ENCODE measurements at regions of chr16 and their contacts with region 1.

Region 1: DNA sequence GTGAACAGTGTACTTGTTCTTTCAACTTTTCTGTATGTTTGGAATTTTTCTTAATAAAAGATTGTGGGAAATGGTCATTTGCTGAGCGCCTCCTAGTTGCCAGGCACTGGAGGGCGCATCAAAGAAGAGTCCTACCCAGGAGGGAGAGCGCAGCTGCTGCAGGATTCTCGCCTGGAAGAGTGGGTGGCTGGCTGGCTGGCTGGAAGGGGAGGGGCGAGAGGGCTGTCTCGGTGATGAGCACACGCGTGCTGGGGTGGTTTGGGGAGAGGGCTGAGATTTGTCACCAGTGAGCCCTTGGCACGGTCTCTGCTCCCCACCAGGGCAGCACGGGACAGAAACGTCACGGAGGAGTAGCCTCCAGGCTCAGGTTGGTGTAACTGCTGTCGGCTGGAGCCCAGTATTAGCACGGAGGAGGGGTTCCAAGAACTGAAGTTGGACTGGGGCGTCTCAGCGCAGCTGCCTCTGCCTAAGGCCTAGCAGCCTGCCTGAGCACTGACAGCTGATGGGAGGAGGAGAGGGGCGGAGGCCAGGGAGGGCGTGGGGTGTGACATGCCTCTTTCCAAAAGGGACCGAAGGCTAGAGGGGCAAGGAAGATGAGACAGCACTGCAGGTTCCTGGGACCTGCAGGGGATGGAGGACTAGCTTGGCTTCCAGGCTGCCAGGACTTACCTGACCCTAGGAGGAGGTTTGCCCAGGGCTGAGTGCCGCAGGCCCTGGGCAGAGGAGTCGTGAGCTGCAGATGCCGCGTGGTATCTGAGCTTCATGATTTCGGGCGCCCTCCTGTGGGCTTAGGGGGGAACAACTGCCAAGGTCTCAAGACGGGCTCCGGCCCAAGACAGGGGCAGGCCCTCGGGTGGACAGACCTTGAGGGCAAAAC is 5.7 kb downstream of the LDHD start:
- DNase-seq: peak; percentile 90
- H3K4me3 Mint-ChIP-seq: peak overlapping the region; percentile 83
- H3K27ac Mint-ChIP-seq: peak overlapping the region; percentile 85
- H3K4me1 Mint-ChIP-seq: peaks cover 59% of the 10 kb centered on the region
- H3K27me3 Mint-ChIP-seq: peaks cover 7% of the 10 kb centered on the region

Region 2: GRCh38 chr16:74709441-74709877 is 401.4 kb before region 1 on chr16:
- CTCF ChIA-PET with region 1: interaction called, 4 read pairs
- POLR2A ChIA-PET with region 1: no interaction called
- intact Hi-C with region 1: loop called (anchors 2 kb)
- DNase-seq: peak; percentile 88
- H3K4me3 Mint-ChIP-seq: no peak overlapping the region
- H3K27ac Mint-ChIP-seq: peak overlapping the region; percentile 2
- H3K4me1 Mint-ChIP-seq: peaks cover 10% of the 10 kb centered on the region
- H3K27me3 Mint-ChIP-seq: no peaks in the 10 kb centered on the region

Region 3: GRCh38 chr16:74862741-74863244 is 248.1 kb before region 1 on chr16:
- CTCF ChIA-PET with region 1: interaction called, 12 read pairs
- POLR2A ChIA-PET with region 1: no interaction called
- intact Hi-C with region 1: loop called (anchors 2 kb)
- DNase-seq: peak; percentile 29
- H3K4me3 Mint-ChIP-seq: no peak overlapping the region
- H3K27ac Mint-ChIP-seq: no peak overlapping the region
- H3K4me1 Mint-ChIP-seq: peaks cover 4% of the 10 kb centered on the region
- H3K27me3 Mint-ChIP-seq: no peaks in the 10 kb centered on the region

Region 4: DNA sequence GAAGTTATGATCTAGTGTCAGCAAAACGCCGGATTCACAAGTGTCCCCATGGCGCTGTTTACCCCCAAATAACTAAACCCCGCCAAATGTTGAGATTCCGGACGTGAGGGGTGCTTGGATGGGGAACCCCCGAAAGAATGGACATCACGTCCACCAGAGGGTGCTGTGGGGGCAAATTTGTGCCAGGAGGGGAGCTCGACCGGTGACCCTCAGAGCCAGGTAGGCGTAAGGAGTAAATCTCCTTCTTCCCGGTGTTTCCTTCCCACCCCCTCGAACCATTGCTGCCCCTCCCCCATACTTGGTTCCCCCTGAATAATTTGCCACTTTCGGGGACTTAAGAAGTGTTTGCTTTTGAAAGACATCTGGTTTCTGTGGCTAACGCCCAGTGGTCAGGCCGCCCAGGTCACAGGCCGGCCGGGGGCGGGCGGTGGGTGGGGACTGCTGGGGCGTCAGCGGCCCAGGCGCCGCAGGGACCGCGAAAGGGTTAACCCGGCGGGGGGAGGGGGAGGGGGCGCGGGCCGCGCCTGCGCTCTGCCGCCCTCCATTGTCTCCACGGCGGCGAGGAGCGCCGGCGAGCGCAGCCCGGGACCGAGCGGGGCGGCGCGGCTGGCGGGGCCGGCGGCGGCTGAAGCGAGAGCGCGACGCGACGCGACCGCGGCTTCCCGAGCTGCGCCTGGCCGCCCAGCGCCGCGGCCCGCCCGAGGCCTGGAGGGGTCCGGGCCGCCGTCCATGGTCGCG is 112.2 kb before region 1 on chr16 and contains the start of gene ZNRF1:
- CTCF ChIA-PET with region 1: interaction called, 222 read pairs
- POLR2A ChIA-PET with region 1: interaction called, 35 read pairs
- intact Hi-C with region 1: loop called (anchors 1 kb)
- DNase-seq: peak; percentile 90
- H3K4me3 Mint-ChIP-seq: peak within 1 kb of the TSS; percentile 88
- H3K27ac Mint-ChIP-seq: peak within 1 kb of the TSS; percentile 84
- H3K4me1 Mint-ChIP-seq: peaks cover 32% of the 10 kb centered on the region
- H3K27me3 Mint-ChIP-seq: no peaks in the 10 kb centered on the region
- total RNA-seq, gene ZNRF1: 40.9 to 45.6 TPM

Region 5: GRCh38 chr16:75074920-75075687 is 35.8 kb before region 1 on chr16:
- CTCF ChIA-PET with region 1: interaction called, 27 read pairs
- POLR2A ChIA-PET with region 1: interaction called, 11 read pairs
- intact Hi-C with region 1: loop called (anchors 1 kb)
- DNase-seq: peak; percentile 93
- H3K4me3 Mint-ChIP-seq: peak overlapping the region; percentile 52
- H3K27ac Mint-ChIP-seq: peak overlapping the region; percentile 91
- H3K4me1 Mint-ChIP-seq: peaks cover 42% of the 10 kb centered on the region
- H3K27me3 Mint-ChIP-seq: no peaks in the 10 kb centered on the region

Region 6: GRCh38 chr16:75148311-75149195 is 37.7 kb after region 1 on chr16 and contains the start of gene ZFP1:
- CTCF ChIA-PET with region 1: interaction called, 6 read pairs
- POLR2A ChIA-PET with region 1: no interaction called
- intact Hi-C with region 1: loop called (anchors 2 kb)
- DNase-seq: peak; percentile 96
- H3K4me3 Mint-ChIP-seq: peak within 1 kb of the TSS; percentile 87
- H3K27ac Mint-ChIP-seq: peak within 1 kb of the TSS; percentile 76
- H3K4me1 Mint-ChIP-seq: peaks cover 29% of the 10 kb centered on the region
- H3K27me3 Mint-ChIP-seq: no peaks in the 10 kb centered on the region
- total RNA-seq, gene ZFP1: 17.2 to 19.4 TPM

Region 7: GRCh38 chr16:75192601-75193297 is 81.9 kb after region 1 on chr16:
- CTCF ChIA-PET with region 1: no interaction called
- POLR2A ChIA-PET with region 1: no interaction called
- intact Hi-C with region 1: no loop called
- DNase-seq: no peak
- H3K4me3 Mint-ChIP-seq: no peak overlapping the region
- H3K27ac Mint-ChIP-seq: no peak overlapping the region
- H3K4me1 Mint-ChIP-seq: no peaks in the 10 kb centered on the region
- H3K27me3 Mint-ChIP-seq: peaks cover 10% of the 10 kb centered on the region

Measured in activated CD4-positive, alpha-beta memory T cell treated with anti-CD3 and anti-CD28 coated beads for 36 hours (primary cell).